Upper lobe of right lung (tissue), 1 donor: ENCODE measurements at regions of chr6 and their contacts with region 1.

Region 1: DNA sequence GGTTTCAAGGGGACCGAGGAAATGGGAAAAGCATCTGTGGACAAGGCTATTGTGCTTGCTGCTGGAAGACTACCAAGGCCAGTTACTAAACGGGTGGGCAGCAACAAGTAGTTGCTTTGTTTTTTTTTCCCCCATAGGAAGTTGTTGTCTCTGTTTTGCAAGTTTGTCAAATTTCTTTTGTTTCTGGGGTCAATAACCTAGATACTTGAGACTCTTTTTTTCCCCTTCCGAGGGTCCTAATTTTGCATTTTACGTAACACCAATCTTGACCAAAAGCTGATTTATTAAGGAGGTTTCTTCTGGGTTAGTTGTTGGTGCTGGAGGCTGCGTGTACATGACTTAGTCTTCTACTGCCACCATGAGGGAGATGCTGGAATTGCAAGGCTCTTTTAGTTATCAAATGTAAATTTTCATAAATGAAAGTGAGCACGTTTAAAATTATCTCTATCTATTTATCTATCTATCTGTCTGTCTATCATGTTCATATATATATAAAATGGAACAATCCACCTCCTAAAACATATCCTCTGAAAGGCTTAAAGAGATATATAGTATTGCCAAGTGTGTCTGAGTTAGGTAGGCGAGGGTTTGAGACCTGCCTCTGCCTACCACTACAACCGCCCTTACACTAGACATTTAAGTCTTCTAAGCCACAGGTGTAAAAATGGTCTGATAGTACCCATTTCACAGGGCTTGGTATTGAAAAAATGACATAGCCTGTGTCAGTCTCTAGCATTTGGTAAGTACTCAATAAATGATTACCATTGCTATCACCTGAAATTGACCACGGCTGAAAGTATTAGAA is 60.2 kb downstream of the GCLC start:
- DNase-seq: no peak
- ATAC-seq: peak; percentile 91
- H3K4me3 ChIP-seq: no peak overlapping the region
- H3K27ac ChIP-seq: no peak overlapping the region
- H3K4me1 ChIP-seq: peaks cover 9% of the 10 kb centered on the region
- H3K27me3 ChIP-seq: peaks cover 8% of the 10 kb centered on the region
- CTCF ChIP-seq: peak; percentile 98

Region 2: DNA sequence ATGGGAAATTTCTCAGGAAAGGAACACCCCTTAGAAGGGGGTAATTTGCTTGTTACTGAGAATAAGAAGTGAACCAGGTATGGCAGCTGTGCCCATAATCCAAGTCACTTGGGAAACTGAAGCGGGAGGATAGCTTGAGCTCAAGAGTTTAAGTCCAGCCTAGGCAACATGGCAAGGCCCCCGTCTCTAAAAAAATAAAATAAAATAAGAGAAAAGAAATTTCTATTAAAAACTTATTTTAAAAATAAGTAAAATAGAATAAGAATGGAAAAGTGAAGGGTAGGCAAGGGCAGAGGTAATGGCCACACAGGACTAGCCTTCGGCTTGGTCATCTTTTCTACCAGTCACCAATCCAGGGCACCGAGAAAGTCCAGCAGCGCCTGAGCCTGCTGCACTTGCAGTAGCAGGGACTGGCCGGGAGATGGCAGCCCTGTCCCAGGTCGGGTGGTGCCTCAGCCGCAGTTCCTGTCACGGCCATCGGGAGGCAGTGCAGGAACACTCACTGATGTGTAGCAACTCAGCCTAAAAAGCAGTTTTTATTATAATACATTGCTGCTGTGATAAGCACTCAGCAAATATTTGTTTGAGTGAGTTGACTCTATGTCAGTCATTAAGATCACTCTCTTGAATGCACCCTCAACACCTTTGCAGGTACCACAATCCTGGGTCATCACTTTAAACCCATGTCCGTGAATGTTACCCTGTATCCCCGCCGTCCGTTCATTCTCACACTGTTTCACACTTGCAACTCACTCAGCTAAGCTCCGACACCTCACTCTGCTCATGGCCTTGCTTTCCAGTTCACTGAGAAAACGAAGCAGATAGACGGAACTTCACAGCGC is 312.9 kb before region 1 on chr6:
- intact Hi-C with region 1: loop called (anchors 5 kb)
- DNase-seq: peak; percentile 93
- ATAC-seq: peak; percentile 100
- H3K4me3 ChIP-seq: no peak overlapping the region
- H3K27ac ChIP-seq: no peak overlapping the region
- H3K4me1 ChIP-seq: no peaks in the 10 kb centered on the region
- H3K27me3 ChIP-seq: no peaks in the 10 kb centered on the region
- CTCF ChIP-seq: peak; percentile 100